Cardiac septum (tissue), 1 donor: ENCODE measurements at regions of chr1 and their contacts with region 1.

Region 1: GRCh38 chr1:197637406-197637805 is 137.9 kb downstream of the DENND1B start:
- DNase-seq: no peak

Region 2: GRCh38 chr1:197614916-197615692 is 22.3 kb before region 1 on chr1:
- intact Hi-C with region 1: no loop called
- DNase-seq: no peak

Region 3: DNA sequence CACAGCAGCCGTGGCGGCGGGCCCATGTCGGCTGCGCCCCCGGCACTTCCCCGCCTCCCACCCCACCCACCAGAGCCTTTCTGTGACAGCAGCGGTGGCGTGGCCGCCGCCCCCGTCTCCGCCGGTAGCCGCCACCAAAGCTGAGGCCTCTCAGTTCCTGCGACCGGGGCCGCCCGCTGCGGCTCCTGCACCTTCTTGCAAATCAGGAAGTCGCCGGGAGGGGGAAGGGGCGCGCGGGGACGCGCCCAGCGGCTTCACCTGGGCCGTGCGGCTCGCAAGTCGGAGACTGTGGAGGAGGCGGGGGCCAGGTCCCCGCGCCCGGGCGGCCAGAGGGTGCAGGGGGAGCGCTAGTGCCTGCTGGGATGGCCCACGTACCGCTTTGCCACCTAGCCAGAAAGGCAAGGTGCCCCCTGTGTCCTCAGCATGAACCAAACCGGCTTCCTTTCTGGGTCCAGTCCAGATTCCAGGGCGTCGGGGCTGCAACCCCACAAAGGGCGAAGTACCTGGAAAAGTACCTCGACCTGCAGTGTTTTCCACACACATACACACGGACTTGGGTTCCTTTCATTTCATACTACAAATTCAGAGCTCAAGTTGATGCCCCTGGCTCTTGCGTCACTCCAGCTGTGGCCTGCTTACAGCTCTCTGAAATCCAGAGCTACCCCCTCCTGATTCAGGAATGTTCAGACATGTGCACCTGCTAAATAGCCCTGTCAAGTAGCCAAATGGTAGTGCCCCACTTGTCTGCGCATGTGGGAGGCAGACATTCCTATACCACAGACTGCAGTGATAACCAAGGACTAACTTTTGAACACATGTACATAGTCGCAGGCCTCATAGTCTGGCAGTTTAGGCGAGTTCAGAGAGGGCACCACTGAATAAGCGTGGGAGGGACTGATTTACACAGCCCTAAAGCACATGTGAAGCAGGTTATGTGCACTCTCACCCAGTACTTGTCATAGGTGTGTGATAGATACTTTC is 138.2 kb after region 1 on chr1 and contains the start of gene DENND1B:
- intact Hi-C with region 1: loop called (anchors 2 kb)
- DNase-seq: peak; percentile 94
- total RNA-seq, gene DENND1B: 22.0 TPM